ENCODE measurements at regions of chr1 and their contacts with region 1.

Region 1: GRCh38 chr1:152459596-152460528 is 45.8 kb upstream of the CRNN start:
- DNase-seq: peak; percentile 84
- ATAC-seq: peak; percentile 96
- H3K4me3 ChIP-seq: peak overlapping the region; percentile 25; the same call in 1 of the 2 replicates
- H3K27ac ChIP-seq: peak overlapping the region; percentile 51
- H3K4me1 ChIP-seq: peaks cover 10% of the 10 kb centered on the region
- H3K27me3 ChIP-seq: no peaks in the 10 kb centered on the region
- CTCF ChIP-seq: peak; percentile 64 to 88 (median 83)
- EP300 ChIP-seq: 0 out of 4 replicates have a peak, but pooled peaks of 1 of the 2 experiments have one; percentile 27
- POLR2A ChIP-seq: peak; percentile 51; the same call in 1 of the 2 replicates
- RAD21 ChIP-seq: 0 out of 2 replicates have a peak, but pooled peaks have one; percentile 21

Region 2: DNA sequence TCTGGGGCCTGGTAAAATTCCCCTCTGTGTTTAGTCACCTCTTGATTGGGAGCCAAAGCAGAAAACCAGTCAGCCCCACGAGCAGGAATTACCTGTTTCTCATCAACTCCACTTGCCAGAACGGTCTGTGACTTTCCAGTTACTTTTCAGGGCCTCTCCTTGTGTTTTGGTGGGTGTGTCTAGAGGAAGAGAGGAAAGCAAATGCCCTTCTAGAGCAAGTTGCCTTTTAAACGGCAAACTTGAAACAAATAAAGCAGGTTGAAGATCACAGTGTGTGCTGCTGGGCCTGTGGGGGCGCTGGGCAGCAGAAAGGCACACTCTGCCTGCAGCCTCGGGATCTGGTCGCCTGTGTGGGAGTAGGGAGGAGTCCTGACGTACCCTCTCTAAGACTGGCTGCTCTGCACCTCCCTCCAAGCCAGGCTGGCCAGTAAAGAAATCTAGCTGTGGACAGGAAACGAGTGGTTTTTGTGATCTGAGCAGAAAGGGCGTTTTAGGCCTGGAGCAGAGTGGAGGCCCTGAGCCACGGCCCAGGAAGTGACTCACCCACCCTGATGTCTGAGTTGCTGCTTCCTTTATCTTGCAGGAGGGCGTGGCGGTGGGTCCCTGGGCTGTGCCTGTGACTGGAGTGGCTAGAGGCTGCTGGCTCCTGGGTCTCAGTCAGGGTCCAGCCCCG is 412.0 kb before region 1 on chr1:
- CTCF ChIA-PET with region 1: interaction called, 79 read pairs
- POLR2A ChIA-PET with region 1: no interaction called
- RAD21 ChIA-PET with region 1: interaction called, 7 read pairs
- SMC1A ChIA-PET with region 1: interaction called, 13 read pairs
- in situ Hi-C with region 1: loop called (anchors 5 kb)
- intact Hi-C with region 1: loop called (anchors 1 kb)
- DNase-seq: peak; percentile 96
- ATAC-seq: peak; percentile 97
- H3K4me3 ChIP-seq: peak overlapping the region; percentile 20; the same call in 1 of the 2 replicates
- H3K27ac ChIP-seq: peak overlapping the region; percentile 80
- H3K4me1 ChIP-seq: peaks cover 15% of the 10 kb centered on the region
- H3K27me3 ChIP-seq: 0 out of 4 replicates have a peak, but pooled peaks cover 0 to 3% of the 10 kb centered on the region in 2 experiments
- CTCF ChIP-seq: peak; percentile 51 to 65 (median 65)
- EP300 ChIP-seq: no peak
- POLR2A ChIP-seq: peak; percentile 77
- RAD21 ChIP-seq: no peak

Region 3: DNA sequence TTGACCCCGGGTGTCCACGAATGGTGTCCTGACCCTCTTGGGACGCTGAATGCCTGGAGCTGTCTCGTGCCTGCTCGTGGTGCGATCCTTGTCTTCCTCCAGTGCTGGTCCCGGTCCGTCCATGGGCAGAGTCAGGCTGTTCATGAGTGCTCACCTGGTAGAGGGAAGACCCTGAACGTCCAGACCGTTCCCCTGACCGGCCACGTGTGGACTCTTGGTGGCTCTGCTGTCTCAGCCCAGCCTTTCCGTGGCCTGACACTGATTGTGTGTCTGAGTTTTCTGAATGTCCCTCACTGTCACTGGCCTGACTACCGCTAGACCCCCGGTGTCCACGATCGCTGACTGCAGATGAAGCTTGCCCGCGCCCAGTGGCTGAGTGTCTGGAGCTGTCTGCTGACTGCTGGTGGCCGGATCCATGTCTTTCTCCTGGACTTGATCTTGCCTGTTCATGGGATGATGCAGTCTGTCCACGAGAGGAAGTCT is 146.5 kb before region 1 on chr1:
- CTCF ChIA-PET with region 1: no interaction called
- POLR2A ChIA-PET with region 1: no interaction called
- RAD21 ChIA-PET with region 1: no interaction called
- SMC1A ChIA-PET with region 1: no interaction called
- in situ Hi-C with region 1: no loop called
- intact Hi-C with region 1: no loop called
- DNase-seq: no peak
- ATAC-seq: no peak
- H3K4me3 ChIP-seq: no peak overlapping the region
- H3K27ac ChIP-seq: no peak overlapping the region
- H3K4me1 ChIP-seq: no peaks in the 10 kb centered on the region
- H3K27me3 ChIP-seq: no peaks in the 10 kb centered on the region
- CTCF ChIP-seq: no peak
- EP300 ChIP-seq: no peak
- POLR2A ChIP-seq: no peak
- RAD21 ChIP-seq: no peak

Region 4: GRCh38 chr1:152347116-152347728 is 112.6 kb before region 1 on chr1:
- CTCF ChIA-PET with region 1: interaction called, 66 read pairs
- POLR2A ChIA-PET with region 1: no interaction called
- RAD21 ChIA-PET with region 1: interaction called, 21 read pairs
- SMC1A ChIA-PET with region 1: interaction called, 25 read pairs
- in situ Hi-C with region 1: no loop called
- intact Hi-C with region 1: loop called (anchors 1 kb)
- DNase-seq: peak; percentile 9
- ATAC-seq: peak; percentile 84
- H3K4me3 ChIP-seq: no peak overlapping the region
- H3K27ac ChIP-seq: no peak overlapping the region
- H3K4me1 ChIP-seq: no peaks in the 10 kb centered on the region
- H3K27me3 ChIP-seq: no peaks in the 10 kb centered on the region
- CTCF ChIP-seq: peak; percentile 79 to 93 (median 85)
- EP300 ChIP-seq: no peak
- POLR2A ChIP-seq: no peak
- RAD21 ChIP-seq: peak; percentile 49

Region 5: GRCh38 chr1:152440635-152441471 is 19.0 kb before region 1 on chr1:
- CTCF ChIA-PET with region 1: interaction called, 37 read pairs
- POLR2A ChIA-PET with region 1: no interaction called
- RAD21 ChIA-PET with region 1: interaction called, 25 read pairs
- SMC1A ChIA-PET with region 1: interaction called, 16 read pairs
- in situ Hi-C with region 1: no loop called
- intact Hi-C with region 1: no loop called
- DNase-seq: peak; percentile 38
- ATAC-seq: peak; percentile 100
- H3K4me3 ChIP-seq: no peak overlapping the region
- H3K27ac ChIP-seq: no peak overlapping the region
- H3K4me1 ChIP-seq: no peaks in the 10 kb centered on the region
- H3K27me3 ChIP-seq: 0 out of 4 replicates have a peak, but pooled peaks cover 0 to 2% of the 10 kb centered on the region in 2 experiments
- CTCF ChIP-seq: peak; percentile 85 to 91 (median 85)
- EP300 ChIP-seq: no peak
- POLR2A ChIP-seq: no peak
- RAD21 ChIP-seq: peak; percentile 79

Region 6: DNA sequence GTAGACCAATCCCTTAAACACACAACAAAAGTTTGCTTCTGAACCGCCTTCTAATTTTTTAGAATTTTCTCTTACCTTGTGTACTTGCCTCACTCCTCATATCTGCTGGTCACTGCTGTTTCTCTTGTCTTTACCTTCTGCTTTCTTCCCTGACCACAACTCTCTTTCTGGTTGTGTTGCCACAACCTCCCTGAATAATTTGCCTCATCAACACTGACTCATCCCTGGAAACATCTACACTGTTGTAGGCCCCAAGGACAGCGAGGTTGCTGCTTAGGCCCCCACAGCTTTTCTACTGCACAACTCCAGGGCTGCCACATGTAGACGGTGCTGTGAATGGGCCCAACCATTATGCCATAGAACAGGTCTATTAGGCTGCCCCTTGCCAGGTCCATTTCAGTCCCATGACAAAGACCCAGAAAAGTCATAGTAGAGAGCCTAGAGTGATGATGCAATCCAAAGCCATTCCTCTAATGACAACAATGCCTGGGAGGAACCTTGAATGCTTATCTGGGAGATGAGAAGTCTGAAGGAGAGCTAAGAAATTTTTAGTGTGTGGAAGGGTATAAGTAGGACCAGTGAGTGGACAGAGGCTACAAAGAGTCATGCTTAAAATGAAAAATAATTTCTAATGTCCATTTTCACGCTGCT is 14.2 kb after region 1 on chr1:
- CTCF ChIA-PET with region 1: interaction called, 22 read pairs
- POLR2A ChIA-PET with region 1: no interaction called
- RAD21 ChIA-PET with region 1: interaction called, 3 read pairs
- SMC1A ChIA-PET with region 1: no interaction called
- in situ Hi-C with region 1: no loop called
- intact Hi-C with region 1: no loop called
- DNase-seq: no peak
- ATAC-seq: no peak
- H3K4me3 ChIP-seq: no peak overlapping the region
- H3K27ac ChIP-seq: no peak overlapping the region
- H3K4me1 ChIP-seq: no peaks in the 10 kb centered on the region
- H3K27me3 ChIP-seq: no peaks in the 10 kb centered on the region
- CTCF ChIP-seq: no peak
- EP300 ChIP-seq: no peak
- POLR2A ChIP-seq: no peak
- RAD21 ChIP-seq: no peak

Region 7: DNA sequence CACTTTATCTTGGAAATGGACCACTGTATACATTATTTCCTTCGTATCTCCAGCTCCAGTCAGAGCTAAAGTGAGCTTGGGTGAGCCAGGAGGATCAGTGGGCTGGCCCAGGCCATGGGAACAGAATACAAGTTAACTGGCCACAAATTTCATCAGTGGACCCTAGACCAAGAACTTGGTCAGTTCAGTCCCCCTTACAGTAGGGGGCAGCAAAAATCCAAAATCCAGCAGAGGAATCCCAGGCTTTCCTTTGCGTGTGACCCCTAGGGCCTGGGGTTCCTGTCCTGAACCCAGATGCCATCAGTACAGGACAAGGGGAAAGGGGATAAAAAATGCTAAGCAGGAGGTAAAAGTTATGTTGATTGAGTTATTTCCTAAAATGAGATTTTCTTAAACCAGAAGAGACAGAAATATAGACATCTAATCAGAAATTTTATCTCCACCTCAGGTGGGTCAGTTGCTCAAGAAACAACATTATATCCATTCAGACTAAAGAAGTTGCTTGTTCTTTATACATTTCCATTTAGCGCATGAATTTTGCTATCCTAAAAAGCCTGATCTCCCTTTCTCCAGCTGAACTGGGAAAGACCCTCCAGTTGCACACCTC is 26.6 kb after region 1 on chr1:
- CTCF ChIA-PET with region 1: interaction called, 22 read pairs
- POLR2A ChIA-PET with region 1: no interaction called
- RAD21 ChIA-PET with region 1: interaction called, 5 read pairs
- SMC1A ChIA-PET with region 1: no interaction called
- in situ Hi-C with region 1: no loop called
- intact Hi-C with region 1: no loop called
- DNase-seq: no peak
- ATAC-seq: peak; percentile 51
- H3K4me3 ChIP-seq: no peak overlapping the region
- H3K27ac ChIP-seq: no peak overlapping the region
- H3K4me1 ChIP-seq: no peaks in the 10 kb centered on the region
- H3K27me3 ChIP-seq: no peaks in the 10 kb centered on the region
- CTCF ChIP-seq: peak; percentile 42 to 56 (median 44); a peak in 4 of 6 replicates
- EP300 ChIP-seq: no peak
- POLR2A ChIP-seq: no peak
- RAD21 ChIP-seq: peak; percentile 44